ENCODE measurements at regions of chr19 and their contacts with region 1.

Region 1: GRCh38 chr19:13784731-13785452 is 10.4 kb upstream of the ZSWIM4 start:
- DNase-seq: peak; percentile 73

Region 2: DNA sequence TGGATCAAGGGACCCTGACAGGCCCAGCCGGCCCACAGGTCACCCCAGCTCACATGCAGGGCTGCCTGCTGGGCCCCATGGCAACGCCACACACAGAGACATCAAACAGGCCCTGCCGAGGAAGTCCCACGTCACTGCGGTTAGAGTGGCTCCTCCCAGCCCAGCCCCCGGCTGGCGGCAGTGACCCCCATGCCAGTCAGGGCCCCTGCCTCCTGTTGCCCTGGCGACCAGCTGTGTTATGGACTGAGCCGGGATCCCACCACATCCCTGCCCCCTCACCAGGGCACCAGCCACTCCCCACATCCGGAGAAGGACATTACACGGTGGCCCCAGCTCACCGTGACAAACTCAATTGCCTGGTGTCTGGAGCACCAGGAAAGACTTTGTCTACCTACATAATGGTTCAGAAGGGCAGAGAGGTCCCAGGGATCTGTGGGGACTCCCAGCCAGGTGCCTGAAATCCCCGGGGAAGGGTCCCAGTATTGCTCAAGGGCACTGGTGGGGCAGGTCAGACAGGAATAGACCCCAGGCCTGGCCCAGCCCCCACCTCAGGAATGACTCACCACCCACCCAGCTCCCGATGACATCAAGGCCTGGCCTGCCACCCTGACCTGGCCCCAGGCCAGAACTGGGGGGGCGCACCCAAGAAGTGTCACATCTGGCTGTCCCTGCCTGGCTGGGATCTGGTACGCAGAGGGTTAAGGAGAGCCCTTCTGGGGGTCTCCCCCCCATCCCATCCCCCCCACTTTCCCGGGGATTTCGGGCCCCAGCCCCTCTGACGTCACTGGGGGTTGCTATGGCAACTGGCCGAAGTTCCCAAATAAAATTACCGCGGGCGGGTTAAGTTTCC is 61.9 kb after region 1 on chr19:
- in situ Hi-C with region 1: loop called (anchors 10 kb)
- DNase-seq: peak; percentile 97

Measured in KBM-7 (cell line).